Endothelial cell of umbilical vein (primary cell): ENCODE measurements at regions of chr2 and their contacts with region 1.

Region 1: GRCh38 chr2:187842978-187843847 is 289.0 kb upstream of the TFPI start:
- DNase-seq: peak; percentile 75
- H3K4me3 ChIP-seq: no peak overlapping the region
- H3K27ac ChIP-seq: no peak overlapping the region
- H3K4me1 ChIP-seq: no peaks in the 10 kb centered on the region
- H3K27me3 ChIP-seq: no peaks in the 10 kb centered on the region
- CTCF ChIP-seq: peak; percentile 39 to 43
- POLR2A ChIP-seq: no peak

Region 2: DNA sequence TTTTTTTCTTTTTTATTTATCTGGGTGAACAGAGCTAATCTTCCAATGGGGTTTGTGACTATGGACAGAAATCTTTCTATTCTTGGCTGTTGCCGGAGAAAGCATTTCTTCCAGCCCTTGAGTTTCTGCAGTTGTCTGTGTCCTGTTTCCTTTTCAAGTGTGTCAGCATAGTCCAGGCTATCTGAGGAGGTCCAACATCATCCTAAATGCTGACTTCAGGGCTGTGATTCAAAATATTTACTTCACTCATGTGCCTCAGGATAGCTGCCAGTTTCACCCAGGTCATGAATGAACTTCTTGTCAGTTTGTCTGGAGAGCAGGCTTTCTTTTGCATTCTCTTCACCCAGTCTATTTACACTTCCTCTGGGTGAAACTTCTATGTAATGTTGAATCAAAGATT is 1225.4 kb before region 1 on chr2:
- CTCF ChIA-PET with region 1: no interaction called
- POLR2A ChIA-PET with region 1: no interaction called
- dilution Hi-C with region 1: no loop called
- intact Hi-C with region 1: loop called (anchors 5 kb)
- DNase-seq: no peak
- H3K4me3 ChIP-seq: no peak overlapping the region
- H3K27ac ChIP-seq: no peak overlapping the region
- H3K4me1 ChIP-seq: no peaks in the 10 kb centered on the region
- H3K27me3 ChIP-seq: no peaks in the 10 kb centered on the region
- CTCF ChIP-seq: no peak
- POLR2A ChIP-seq: no peak

Region 3: GRCh38 chr2:187594801-187595200 is 248.4 kb before region 1 on chr2:
- CTCF ChIA-PET with region 1: interaction called, 27 read pairs
- POLR2A ChIA-PET with region 1: no interaction called
- dilution Hi-C with region 1: no loop called
- intact Hi-C with region 1: loop called (anchors 1 kb)
- DNase-seq: peak; percentile 44
- H3K4me3 ChIP-seq: no peak overlapping the region
- H3K27ac ChIP-seq: no peak overlapping the region
- H3K4me1 ChIP-seq: no peaks in the 10 kb centered on the region
- H3K27me3 ChIP-seq: no peaks in the 10 kb centered on the region
- CTCF ChIP-seq: no peak
- POLR2A ChIP-seq: no peak

Region 4: DNA sequence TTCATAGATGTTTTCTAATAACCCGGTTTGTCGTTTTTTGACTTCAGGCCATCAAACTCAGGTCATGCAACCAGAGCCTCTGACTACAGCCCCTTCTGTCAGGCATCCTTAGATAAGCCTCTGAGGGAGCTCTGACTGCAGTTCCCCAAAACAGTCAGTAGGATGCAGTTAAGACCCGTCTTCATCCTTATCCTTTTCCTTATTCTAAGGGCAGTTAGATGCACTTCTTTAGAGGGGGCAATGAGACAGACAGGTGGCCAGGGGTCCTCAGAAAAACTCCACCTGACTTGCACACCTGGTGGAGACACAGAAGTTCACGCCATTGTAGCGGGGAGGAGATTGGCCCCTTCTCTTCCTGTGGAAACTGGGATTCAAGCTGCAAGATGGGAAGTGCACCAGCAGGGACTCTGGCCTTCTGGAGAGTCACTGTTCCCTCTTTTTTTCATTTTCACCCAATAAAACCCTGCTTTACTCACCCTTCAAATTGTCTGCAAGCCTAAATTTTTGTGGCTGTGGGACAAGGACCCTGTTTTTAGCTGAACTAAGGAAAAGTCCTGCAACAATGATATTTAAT is 184.2 kb before region 1 on chr2:
- CTCF ChIA-PET with region 1: interaction called, 5 read pairs
- POLR2A ChIA-PET with region 1: no interaction called
- dilution Hi-C with region 1: no loop called
- intact Hi-C with region 1: loop called (anchors 2 kb)
- DNase-seq: peak; percentile 30
- H3K4me3 ChIP-seq: no peak overlapping the region
- H3K27ac ChIP-seq: no peak overlapping the region
- H3K4me1 ChIP-seq: no peaks in the 10 kb centered on the region
- H3K27me3 ChIP-seq: no peaks in the 10 kb centered on the region
- CTCF ChIP-seq: peak; percentile 11 to 24
- POLR2A ChIP-seq: no peak

Region 5: DNA sequence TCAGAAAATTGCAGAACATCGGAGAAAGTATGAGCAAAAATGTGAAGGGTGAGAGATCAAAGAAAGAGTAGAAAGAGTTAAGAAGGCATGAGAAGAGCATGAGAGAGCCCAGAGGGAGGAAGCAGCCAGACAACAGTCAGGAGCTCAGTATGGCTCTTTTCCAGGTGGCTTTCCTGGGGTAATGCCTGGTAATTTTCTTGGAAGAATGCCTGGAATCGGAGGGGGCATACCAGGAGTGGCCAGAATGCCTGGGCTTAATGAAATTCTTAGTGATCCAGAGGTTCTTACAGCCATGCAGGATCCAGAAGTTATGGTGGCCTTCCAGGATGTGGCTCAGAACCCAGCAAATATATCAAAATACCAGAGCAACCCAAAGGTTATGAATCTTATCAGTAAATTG is 17.2 kb before region 1 on chr2:
- CTCF ChIA-PET with region 1: no interaction called
- POLR2A ChIA-PET with region 1: no interaction called
- dilution Hi-C with region 1: no loop called
- intact Hi-C with region 1: no loop called
- DNase-seq: peak; percentile 16
- H3K4me3 ChIP-seq: no peak overlapping the region
- H3K27ac ChIP-seq: no peak overlapping the region
- H3K4me1 ChIP-seq: no peaks in the 10 kb centered on the region
- H3K27me3 ChIP-seq: no peaks in the 10 kb centered on the region
- CTCF ChIP-seq: no peak
- POLR2A ChIP-seq: no peak

Region 6: GRCh38 chr2:188333751-188334524 is 490.7 kb after region 1 on chr2:
- CTCF ChIA-PET with region 1: no interaction called
- POLR2A ChIA-PET with region 1: no interaction called
- dilution Hi-C with region 1: no loop called
- intact Hi-C with region 1: no loop called
- DNase-seq: no peak
- H3K4me3 ChIP-seq: no peak overlapping the region
- H3K27ac ChIP-seq: no peak overlapping the region
- H3K4me1 ChIP-seq: peaks cover 7% of the 10 kb centered on the region
- H3K27me3 ChIP-seq: no peaks in the 10 kb centered on the region
- CTCF ChIP-seq: no peak
- POLR2A ChIP-seq: no peak

Region 7: DNA sequence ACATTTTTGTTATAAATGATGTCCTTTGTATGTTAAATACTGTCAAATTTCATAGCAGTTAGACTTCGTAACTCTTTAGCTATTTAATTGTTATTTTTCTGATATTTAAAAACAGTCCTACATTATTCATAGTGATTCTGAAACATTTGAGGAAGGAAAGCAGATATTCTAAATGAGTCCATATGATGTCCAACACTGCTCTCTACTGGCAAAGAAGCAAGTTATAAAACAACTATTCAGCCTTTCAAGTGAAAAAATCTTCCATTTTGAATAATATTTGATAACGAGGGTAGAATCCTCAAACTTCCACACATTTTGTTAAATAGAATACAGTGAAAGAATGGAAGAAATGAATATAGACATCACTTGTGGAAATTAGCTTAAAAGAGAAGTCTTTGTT is 669.2 kb after region 1 on chr2:
- CTCF ChIA-PET with region 1: interaction called, 7 read pairs
- POLR2A ChIA-PET with region 1: no interaction called
- dilution Hi-C with region 1: no loop called
- intact Hi-C with region 1: loop called (anchors 1 kb)
- DNase-seq: peak; percentile 69
- H3K4me3 ChIP-seq: no peak overlapping the region
- H3K27ac ChIP-seq: no peak overlapping the region
- H3K4me1 ChIP-seq: peaks cover 2% of the 10 kb centered on the region
- H3K27me3 ChIP-seq: no peaks in the 10 kb centered on the region
- CTCF ChIP-seq: peak; percentile 9 to 32
- POLR2A ChIP-seq: no peak